ENCODE measurements at regions of chr1 and their contacts with region 1.

Region 1: GRCh38 chr1:59759156-59759925 is 55.4 kb upstream of the HOOK1 start:
- DNase-seq: peak; percentile 42 to 81 (median 62)
- ATAC-seq: peak; percentile 88
- H3K4me3 ChIP-seq: no peak overlapping the region
- H3K4me3 Mint-ChIP-seq: no peak overlapping the region
- H3K27ac ChIP-seq: no peak overlapping the region
- H3K27ac Mint-ChIP-seq: no peak overlapping the region
- H3K4me1 ChIP-seq: peaks cover 6% of the 10 kb centered on the region
- H3K4me1 Mint-ChIP-seq: peaks cover 4% of the 10 kb centered on the region
- H3K27me3 ChIP-seq: no peaks in the 10 kb centered on the region
- H3K27me3 Mint-ChIP-seq: no peaks in the 10 kb centered on the region
- CTCF ChIP-seq: peak; percentile 88

Region 2: GRCh38 chr1:58515794-58516401 is 1243.4 kb before region 1 on chr1:
- CTCF ChIA-PET with region 1: no interaction called
- POLR2A ChIA-PET with region 1: no interaction called
- intact Hi-C with region 1: loop called (anchors 1 to 5 kb)
- DNase-seq: peak in 8 of 14 experiments; percentile 1 to 81 (median 25)
- ATAC-seq: peak; percentile 54
- H3K4me3 ChIP-seq: no peak overlapping the region
- H3K4me3 Mint-ChIP-seq: no peak overlapping the region
- H3K27ac ChIP-seq: no peak overlapping the region
- H3K27ac Mint-ChIP-seq: peak overlapping the region; percentile 25
- H3K4me1 ChIP-seq: no peaks in the 10 kb centered on the region
- H3K4me1 Mint-ChIP-seq: peaks cover 9% of the 10 kb centered on the region
- H3K27me3 ChIP-seq: no peaks in the 10 kb centered on the region
- H3K27me3 Mint-ChIP-seq: no peaks in the 10 kb centered on the region
- CTCF ChIP-seq: peak; percentile 83

Region 3: DNA sequence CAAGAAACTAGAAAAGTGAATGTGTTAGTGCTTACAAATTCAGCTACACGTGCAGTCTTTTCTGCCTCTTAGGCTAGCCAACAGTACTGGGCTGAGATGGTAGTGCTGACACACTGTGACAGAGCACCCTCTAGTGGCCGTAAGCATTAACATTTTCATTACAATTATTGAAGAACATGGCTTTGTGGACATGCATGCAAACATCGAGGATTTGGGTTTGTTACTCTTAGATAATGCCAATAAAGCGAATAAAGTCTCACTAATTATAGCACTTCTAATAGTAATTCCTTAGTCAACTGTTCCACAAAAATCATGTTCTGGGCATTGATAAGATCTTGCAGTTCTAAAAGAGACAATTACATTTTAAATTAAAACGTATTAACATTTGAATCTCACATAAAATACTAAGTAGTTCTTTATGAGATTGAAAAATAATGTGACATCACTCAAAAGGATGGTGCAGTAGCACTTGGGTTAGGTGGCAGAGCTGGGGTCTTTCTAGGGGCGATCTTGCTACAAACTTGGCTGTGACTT is 1106.6 kb before region 1 on chr1:
- CTCF ChIA-PET with region 1: interaction called, 5 read pairs
- POLR2A ChIA-PET with region 1: no interaction called
- intact Hi-C with region 1: loop called in 1 of 2 experiments (anchors 1 kb)
- DNase-seq: peak; percentile 16 to 86 (median 42)
- ATAC-seq: peak; percentile 92
- H3K4me3 ChIP-seq: no peak overlapping the region
- H3K4me3 Mint-ChIP-seq: no peak overlapping the region
- H3K27ac ChIP-seq: no peak overlapping the region
- H3K27ac Mint-ChIP-seq: no peak overlapping the region
- H3K4me1 ChIP-seq: peaks cover 11% of the 10 kb centered on the region
- H3K4me1 Mint-ChIP-seq: peaks cover 23% of the 10 kb centered on the region
- H3K27me3 ChIP-seq: no peaks in the 10 kb centered on the region
- H3K27me3 Mint-ChIP-seq: no peaks in the 10 kb centered on the region
- CTCF ChIP-seq: peak; percentile 96

Region 4: DNA sequence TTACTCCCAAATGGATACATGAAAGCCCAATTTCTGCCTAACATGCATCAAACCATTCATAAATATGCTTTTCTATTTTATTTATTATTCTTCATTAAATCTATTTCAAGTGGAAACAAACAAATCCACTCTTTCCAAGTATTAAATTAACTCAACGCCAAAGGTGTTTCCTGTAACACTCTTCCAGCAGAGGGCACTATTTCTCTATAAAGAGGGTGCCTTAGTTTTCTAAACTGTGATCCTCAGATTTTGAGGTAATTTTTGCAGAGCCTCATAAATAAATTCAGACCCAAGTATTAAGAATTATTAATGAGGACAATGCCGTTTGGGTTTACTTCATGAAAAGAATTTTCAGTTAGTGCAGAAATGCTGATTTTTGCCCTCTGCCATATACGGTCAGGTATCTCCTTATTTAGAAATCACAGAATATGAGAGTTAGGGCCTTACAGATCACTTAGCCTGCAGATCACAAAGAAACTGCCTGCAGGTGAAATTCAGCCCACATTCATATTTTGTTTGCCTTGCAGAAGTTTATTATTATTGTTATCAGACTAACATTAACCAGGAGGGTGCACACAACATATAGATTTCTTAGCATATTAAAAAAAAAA is 1019.4 kb before region 1 on chr1:
- CTCF ChIA-PET with region 1: interaction called, 8 read pairs
- POLR2A ChIA-PET with region 1: no interaction called
- intact Hi-C with region 1: loop called (anchors 1 kb)
- DNase-seq: peak in 4 of 14 experiments; percentile 42 to 78 (median 75)
- ATAC-seq: no peak
- H3K4me3 ChIP-seq: no peak overlapping the region
- H3K4me3 Mint-ChIP-seq: no peak overlapping the region
- H3K27ac ChIP-seq: no peak overlapping the region
- H3K27ac Mint-ChIP-seq: no peak overlapping the region
- H3K4me1 ChIP-seq: no peaks in the 10 kb centered on the region
- H3K4me1 Mint-ChIP-seq: no peaks in the 10 kb centered on the region
- H3K27me3 ChIP-seq: no peaks in the 10 kb centered on the region
- H3K27me3 Mint-ChIP-seq: no peaks in the 10 kb centered on the region
- CTCF ChIP-seq: peak; percentile 94